HEK293 (cell line): ENCODE measurements at regions of chr1 and their contacts with region 1.

Region 1: GRCh38 chr1:236451796-236452373 is 57.8 kb downstream of the EDARADD start:
- H3K4me3 ChIP-seq: no peak overlapping the region
- H3K27ac ChIP-seq: no peak overlapping the region
- H3K4me1 ChIP-seq: no peaks in the 10 kb centered on the region
- CTCF ChIP-seq: peak; percentile 43; the same call in 1 of the 2 replicates

Region 2: GRCh38 chr1:236438614-236439013 is 13.3 kb before region 1 on chr1:
- CTCF ChIA-PET with region 1: interaction called, 17 read pairs
- POLR2A ChIA-PET with region 1: no interaction called
- H3K4me3 ChIP-seq: no peak overlapping the region
- H3K27ac ChIP-seq: no peak overlapping the region
- H3K4me1 ChIP-seq: no peaks in the 10 kb centered on the region
- CTCF ChIP-seq: no peak

Region 3: GRCh38 chr1:236465959-236466303 is 14.0 kb after region 1 on chr1:
- CTCF ChIA-PET with region 1: interaction called, 17 read pairs
- POLR2A ChIA-PET with region 1: no interaction called
- H3K4me3 ChIP-seq: no peak overlapping the region
- H3K27ac ChIP-seq: no peak overlapping the region; the same call in 1 of the 2 replicates
- H3K4me1 ChIP-seq: peaks cover 10% of the 10 kb centered on the region
- CTCF ChIP-seq: no peak

Region 4: DNA sequence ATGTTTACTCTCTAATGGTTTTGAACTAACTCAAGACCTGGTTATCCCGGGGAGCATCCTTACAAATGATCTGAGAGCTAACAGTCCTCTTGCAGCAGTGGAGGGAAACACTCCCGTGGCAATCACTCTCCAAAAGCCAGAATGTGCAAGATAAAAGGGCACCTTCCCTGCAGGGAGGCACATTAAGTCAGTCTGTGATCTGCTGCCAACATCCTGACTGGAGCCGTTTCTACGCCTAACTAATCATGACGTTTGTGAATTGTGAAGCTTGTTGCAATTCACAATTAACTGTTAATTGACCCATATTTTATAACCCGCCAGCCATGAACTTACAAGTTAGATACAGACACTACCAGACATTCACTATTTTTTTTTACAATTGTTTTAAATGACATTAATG is 19.8 kb after region 1 on chr1:
- CTCF ChIA-PET with region 1: interaction called, 15 read pairs
- POLR2A ChIA-PET with region 1: no interaction called
- H3K4me3 ChIP-seq: no peak overlapping the region
- H3K27ac ChIP-seq: peak overlapping the region; percentile 38
- H3K4me1 ChIP-seq: peaks cover 30% of the 10 kb centered on the region
- CTCF ChIP-seq: no peak